ENCODE measurements at regions of chr19 and their contacts with region 1.

Region 1: GRCh38 chr19:12881172-12881808 is at the start of gene DNASE2:
- DNase-seq: peak; percentile 72
- H3K4me3 ChIP-seq: peak within 1 kb of the TSS; percentile 61
- H3K27me3 ChIP-seq: peaks cover 4% of the 10 kb centered on the region
- CTCF ChIP-seq: no peak
- polyA plus RNA-seq, gene DNASE2: 39.1 and 68.8 TPM in 2 replicates

Region 2: GRCh38 chr19:12806239-12807081 is 74.8 kb before region 1 on chr19 and contains the start of gene RNASEH2A:
- CTCF ChIA-PET with region 1: no interaction called
- POLR2A ChIA-PET with region 1: no interaction called
- DNase-seq: no peak
- H3K4me3 ChIP-seq: peak within 1 kb of the TSS; percentile 70
- H3K27me3 ChIP-seq: no peaks in the 10 kb centered on the region
- CTCF ChIP-seq: peak; percentile 9; the same call in 1 of the 2 replicates
- polyA plus RNA-seq, gene RNASEH2A: 19.9 and 30.3 TPM in 2 replicates

Region 3: GRCh38 chr19:12896460-12896859 is 15.2 kb after region 1 on chr19:
- CTCF ChIA-PET with region 1: interaction called, 4 read pairs
- POLR2A ChIA-PET with region 1: interaction called, 14 read pairs
- DNase-seq: no peak
- H3K4me3 ChIP-seq: no peak overlapping the region
- H3K27me3 ChIP-seq: no peaks in the 10 kb centered on the region
- CTCF ChIP-seq: no peak

Region 4: DNA sequence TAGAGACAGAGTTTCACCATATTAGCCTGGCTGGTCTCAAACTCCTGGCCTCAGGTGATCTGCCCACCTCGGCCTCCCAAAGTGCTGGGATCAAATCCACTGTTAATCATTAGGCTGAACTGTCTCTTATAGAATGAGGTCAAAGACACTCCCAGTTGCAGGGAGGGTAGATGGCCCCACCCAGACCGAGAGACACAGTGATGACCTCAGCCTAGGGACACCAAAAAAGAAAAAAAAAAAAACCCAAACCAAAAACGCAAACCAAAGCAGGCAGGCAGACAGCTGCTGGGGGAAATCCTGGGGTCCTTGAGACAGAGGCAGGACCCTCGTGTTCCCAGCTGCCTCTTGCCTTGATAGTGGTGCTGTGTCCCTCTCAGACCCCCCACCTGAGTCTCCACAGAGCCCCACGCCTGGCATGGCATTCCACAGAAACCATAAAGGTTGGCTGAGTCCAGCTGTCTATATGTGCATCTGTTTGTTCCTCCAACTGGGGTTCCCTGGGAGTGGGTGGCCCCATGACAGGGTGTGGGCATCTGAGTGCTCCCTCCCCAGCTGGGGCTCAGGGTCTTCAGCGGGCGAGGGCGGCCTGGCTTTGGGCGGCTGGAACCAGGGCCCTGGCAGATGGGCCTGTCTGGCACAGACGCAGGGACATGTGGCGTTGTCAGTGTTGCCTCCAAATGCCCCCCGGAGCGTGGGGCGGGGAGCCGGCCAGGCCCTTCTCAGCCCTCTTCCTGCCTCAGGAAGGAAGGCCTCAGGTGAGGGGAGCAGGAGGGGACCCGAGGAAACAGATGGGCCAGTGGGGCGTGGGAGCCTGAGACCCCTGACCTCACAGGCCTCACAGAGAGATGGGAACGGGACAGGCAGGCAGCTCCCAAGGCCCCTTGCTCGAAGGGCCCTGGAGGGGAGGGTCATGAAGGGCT is 93.3 kb after region 1 on chr19:
- CTCF ChIA-PET with region 1: no interaction called
- POLR2A ChIA-PET with region 1: no interaction called
- DNase-seq: no peak
- H3K4me3 ChIP-seq: no peak overlapping the region
- H3K27me3 ChIP-seq: no peaks in the 10 kb centered on the region
- CTCF ChIP-seq: no peak

Measured in BJ (cell line).